WTC11 (cell line): ENCODE measurements at regions of chr5 and their contacts with region 1.

Region 1: GRCh38 chr5:168747987-168748777 is 169.0 kb upstream of the PANK3 start:
- DNase-seq: peak; percentile 86
- ATAC-seq: peak; percentile 99
- H3K4me3 Mint-ChIP-seq: no peak overlapping the region; the same call in 1 of the 2 replicates
- H3K27ac Mint-ChIP-seq: no peak overlapping the region
- H3K4me1 Mint-ChIP-seq: peaks cover 2% of the 10 kb centered on the region; the same call in 1 of the 2 replicates
- H3K27me3 Mint-ChIP-seq: no peaks in the 10 kb centered on the region; the same call in 1 of the 2 replicates
- CTCF ChIP-seq: peak; percentile 90

Region 2: DNA sequence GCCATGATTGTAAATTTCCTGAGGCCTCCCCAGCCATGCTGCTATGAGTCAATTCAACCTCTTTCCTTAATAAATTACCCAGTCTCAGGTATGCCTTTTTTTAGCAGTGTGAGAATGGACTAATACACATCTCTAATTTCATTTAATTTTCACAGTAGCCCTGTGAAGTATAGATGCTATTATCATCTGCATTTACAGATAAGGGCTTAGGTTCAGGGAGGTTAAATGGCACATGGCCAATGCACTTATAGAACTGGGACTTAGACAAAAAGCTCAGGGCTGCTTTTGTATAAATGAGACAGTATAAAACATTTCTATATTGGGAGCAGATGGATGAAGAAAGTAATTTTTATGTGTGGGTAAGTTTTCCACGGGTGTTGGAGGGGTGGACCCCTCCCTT is 106.2 kb before region 1 on chr5:
- CTCF ChIA-PET with region 1: no interaction called
- POLR2A ChIA-PET with region 1: no interaction called
- DNase-seq: no peak
- ATAC-seq: no peak
- H3K4me3 Mint-ChIP-seq: no peak overlapping the region
- H3K27ac Mint-ChIP-seq: no peak overlapping the region
- H3K4me1 Mint-ChIP-seq: 0 out of 2 replicates have a peak, but pooled peaks cover 5% of the 10 kb centered on the region
- H3K27me3 Mint-ChIP-seq: peaks cover 2% of the 10 kb centered on the region; the same call in 1 of the 2 replicates
- CTCF ChIP-seq: no peak

Region 3: DNA sequence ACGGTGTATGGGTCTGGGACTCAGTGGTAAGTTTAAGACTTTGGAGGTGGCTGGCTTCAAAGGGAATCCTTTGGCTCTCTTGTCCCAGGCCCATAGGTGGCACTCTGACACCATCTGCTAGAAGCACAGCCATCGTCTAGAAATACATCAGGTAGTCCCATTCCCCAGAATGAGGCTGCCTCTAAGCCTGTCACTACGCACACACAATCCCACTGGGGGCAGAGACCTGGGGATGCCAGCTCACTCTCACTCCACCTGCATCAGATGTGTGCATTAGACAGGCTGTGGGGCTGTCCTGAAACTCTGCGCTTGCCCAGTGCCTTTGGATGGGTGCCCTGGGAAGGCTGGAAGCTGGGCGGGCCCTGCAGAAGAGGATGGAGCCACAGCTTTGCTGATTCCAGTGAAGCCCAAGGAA is 41.5 kb before region 1 on chr5:
- CTCF ChIA-PET with region 1: interaction called, 11 read pairs
- POLR2A ChIA-PET with region 1: no interaction called
- DNase-seq: peak; percentile 63
- ATAC-seq: peak; percentile 96
- H3K4me3 Mint-ChIP-seq: no peak overlapping the region
- H3K27ac Mint-ChIP-seq: no peak overlapping the region
- H3K4me1 Mint-ChIP-seq: no peaks in the 10 kb centered on the region
- H3K27me3 Mint-ChIP-seq: no peaks in the 10 kb centered on the region
- CTCF ChIP-seq: peak; percentile 41; the same call in 1 of the 2 replicates

Region 4: GRCh38 chr5:168712280-168712924 is 35.8 kb before region 1 on chr5:
- CTCF ChIA-PET with region 1: interaction called, 11 read pairs
- POLR2A ChIA-PET with region 1: no interaction called
- DNase-seq: no peak
- ATAC-seq: peak; percentile 31
- H3K4me3 Mint-ChIP-seq: no peak overlapping the region
- H3K27ac Mint-ChIP-seq: no peak overlapping the region
- H3K4me1 Mint-ChIP-seq: peaks cover 24% of the 10 kb centered on the region
- H3K27me3 Mint-ChIP-seq: no peaks in the 10 kb centered on the region
- CTCF ChIP-seq: no peak

Region 5: DNA sequence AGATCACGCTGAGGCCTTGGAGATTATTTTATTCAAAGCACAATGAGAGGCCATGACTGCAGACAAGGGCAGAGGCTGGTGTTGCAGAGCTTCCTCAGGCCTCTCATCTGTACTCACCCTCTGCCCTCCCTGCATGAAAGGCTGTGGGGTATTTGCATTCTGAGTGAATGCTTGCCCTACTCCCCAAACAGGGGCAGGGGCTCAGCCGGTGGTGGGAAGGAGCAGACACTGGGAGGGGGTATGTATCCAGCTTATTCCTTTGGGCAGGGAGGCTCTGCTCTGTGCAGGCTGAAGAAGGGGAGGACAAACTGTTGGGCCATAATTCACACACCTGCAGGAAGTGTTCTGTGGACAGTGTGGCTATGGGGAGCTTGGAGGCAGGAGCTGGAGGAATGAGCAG is 20.6 kb before region 1 on chr5:
- CTCF ChIA-PET with region 1: interaction called, 16 read pairs
- POLR2A ChIA-PET with region 1: no interaction called
- DNase-seq: no peak
- ATAC-seq: peak; percentile 36
- H3K4me3 Mint-ChIP-seq: no peak overlapping the region
- H3K27ac Mint-ChIP-seq: no peak overlapping the region
- H3K4me1 Mint-ChIP-seq: peaks cover 13% of the 10 kb centered on the region
- H3K27me3 Mint-ChIP-seq: no peaks in the 10 kb centered on the region
- CTCF ChIP-seq: no peak

Region 6: GRCh38 chr5:168881427-168882149 is 133.4 kb after region 1 on chr5:
- CTCF ChIA-PET with region 1: interaction called, 13 read pairs
- POLR2A ChIA-PET with region 1: no interaction called
- DNase-seq: peak; percentile 68
- ATAC-seq: peak; percentile 85
- H3K4me3 Mint-ChIP-seq: no peak overlapping the region
- H3K27ac Mint-ChIP-seq: no peak overlapping the region
- H3K4me1 Mint-ChIP-seq: peaks cover 37% of the 10 kb centered on the region
- H3K27me3 Mint-ChIP-seq: no peaks in the 10 kb centered on the region; the same call in none of the 2 replicates
- CTCF ChIP-seq: no peak

Region 7: GRCh38 chr5:169019871-169020501 is 271.8 kb after region 1 on chr5:
- CTCF ChIA-PET with region 1: no interaction called
- POLR2A ChIA-PET with region 1: no interaction called
- DNase-seq: no peak
- ATAC-seq: peak; percentile 82
- H3K4me3 Mint-ChIP-seq: peak overlapping the region; percentile 38
- H3K27ac Mint-ChIP-seq: no peak overlapping the region
- H3K4me1 Mint-ChIP-seq: peaks cover 22% of the 10 kb centered on the region
- H3K27me3 Mint-ChIP-seq: peaks cover 7% of the 10 kb centered on the region
- CTCF ChIP-seq: no peak